ENCODE measurements at regions of chr6 and their contacts with region 1.

Region 1: DNA sequence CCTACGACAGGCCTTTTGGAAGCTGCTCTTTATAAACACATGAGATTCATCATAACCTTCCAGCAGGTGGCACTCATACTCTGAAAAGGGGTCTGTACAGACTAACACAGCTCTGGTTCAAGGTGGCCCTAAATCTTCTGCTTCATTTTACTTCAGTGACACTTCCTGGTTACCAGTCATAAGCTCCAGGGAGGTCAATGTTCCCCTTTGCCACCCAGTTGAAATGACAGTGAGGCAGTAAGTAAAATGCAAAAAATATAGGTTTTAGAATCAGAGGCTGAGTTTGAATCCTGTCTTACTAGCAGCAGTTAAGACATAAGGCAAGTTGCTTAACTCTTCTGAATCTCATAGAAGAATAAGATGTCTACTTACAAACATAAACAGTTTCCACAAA is 132.8 kb downstream of the CDK19 start:
- DNase-seq: peak; percentile 40
- H3K4me3 Mint-ChIP-seq: no peak overlapping the region
- H3K27ac Mint-ChIP-seq: peak overlapping the region; percentile 62
- H3K4me1 Mint-ChIP-seq: peaks cover 30% of the 10 kb centered on the region
- H3K27me3 Mint-ChIP-seq: no peaks in the 10 kb centered on the region

Region 2: DNA sequence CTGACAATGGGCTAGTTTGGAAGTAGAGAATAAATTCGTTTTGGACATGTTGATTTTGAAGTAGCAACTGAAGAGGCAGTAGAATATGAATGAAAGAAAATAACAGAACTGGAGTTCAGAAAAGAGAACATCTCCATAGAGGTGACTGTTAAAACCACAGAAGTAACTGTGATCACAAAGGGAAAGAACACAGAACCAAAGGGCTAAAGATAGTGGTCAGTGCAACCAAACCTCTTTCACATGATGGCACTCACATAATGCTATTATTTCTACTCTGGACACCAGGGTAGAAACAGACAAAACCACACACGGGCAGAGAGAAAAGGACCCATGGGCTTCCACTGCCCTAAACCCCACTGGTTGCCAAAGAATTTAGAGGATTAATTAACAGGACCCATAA is 74.4 kb after region 1 on chr6:
- intact Hi-C with region 1: no loop called
- DNase-seq: no peak
- H3K4me3 Mint-ChIP-seq: no peak overlapping the region
- H3K27ac Mint-ChIP-seq: no peak overlapping the region
- H3K4me1 Mint-ChIP-seq: peaks cover 6% of the 10 kb centered on the region
- H3K27me3 Mint-ChIP-seq: no peaks in the 10 kb centered on the region

Region 3: GRCh38 chr6:110949679-110950285 is 267.3 kb after region 1 on chr6:
- intact Hi-C with region 1: loop called (anchors 1 kb)
- DNase-seq: no peak
- H3K4me3 Mint-ChIP-seq: no peak overlapping the region
- H3K27ac Mint-ChIP-seq: no peak overlapping the region
- H3K4me1 Mint-ChIP-seq: peaks cover 12% of the 10 kb centered on the region
- H3K27me3 Mint-ChIP-seq: peaks cover 2% of the 10 kb centered on the region

Measured in activated T-helper 2 cell treated with anti-CD3 and anti-CD28 coated beads, Interferon-gamma antibody, Interleukin-2, Interleukin-4, amounts not matched to agents 10 μg/mL and 5 μg/mL and 100 μg/mL, durations not matched to agents 14 hours and 24 hours and 36 hours (primary cell).